Sigmoid colon (tissue), 7 donors: ENCODE measurements at regions of chr1 and their contacts with region 1.

Region 1: DNA sequence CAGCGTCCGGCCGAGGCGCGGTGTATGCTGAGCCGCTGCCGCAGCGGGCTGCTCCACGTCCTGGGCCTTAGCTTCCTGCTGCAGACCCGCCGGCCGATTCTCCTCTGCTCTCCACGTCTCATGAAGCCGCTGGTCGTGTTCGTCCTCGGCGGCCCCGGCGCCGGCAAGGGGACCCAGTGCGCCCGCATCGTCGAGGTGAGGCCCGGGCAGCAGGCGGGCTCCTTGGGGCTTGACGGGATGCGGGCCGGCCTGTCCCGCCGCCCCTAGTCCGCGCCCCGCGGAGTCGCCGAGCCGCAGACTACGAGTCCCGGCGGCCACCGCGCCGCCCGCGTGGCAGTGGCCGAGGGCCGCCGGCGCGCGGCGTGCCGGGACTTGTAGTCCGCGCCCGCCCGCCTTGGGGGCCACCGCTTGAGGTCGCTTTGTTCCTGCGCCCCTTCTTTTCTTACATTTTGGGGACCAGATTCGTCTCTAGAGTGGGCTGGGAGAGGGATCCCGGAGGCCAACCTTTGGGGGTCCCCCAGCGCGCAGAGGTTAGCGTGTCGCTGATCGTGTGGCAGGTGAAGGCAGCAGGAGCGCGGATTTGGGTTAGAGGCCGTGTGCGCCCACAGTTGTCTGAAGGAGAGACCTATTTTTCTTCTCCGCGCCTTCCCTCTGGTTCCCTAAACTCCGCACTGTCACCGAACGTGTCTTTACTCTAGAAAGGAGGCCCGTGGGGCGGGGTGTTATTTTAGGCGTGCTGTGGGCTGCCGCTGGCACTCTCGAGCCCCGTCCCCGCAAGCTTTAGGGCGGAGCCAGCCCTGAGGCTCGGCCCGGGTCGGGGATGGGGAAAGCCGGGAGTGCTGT is 553 bp downstream of the CMPK1 start:
- DNase-seq: peak; percentile 88
- H3K4me3 ChIP-seq: peak overlapping the region; percentile 96 to 98 (median 98)
- H3K27ac ChIP-seq: peak overlapping the region; percentile 98 to 100 (median 100)
- H3K4me1 ChIP-seq: peaks cover 0 to 47% (median 39%) of the 10 kb centered on the region in 4 donors
- H3K27me3 ChIP-seq: no peaks in the 10 kb centered on the region
- CTCF ChIP-seq: peak in 1 of 4 experiments; percentile 13
- EP300 ChIP-seq: no peak
- POLR2A ChIP-seq: peak in 1 of 2 donors; percentile 17

Region 2: GRCh38 chr1:47231301-47232186 is 102.6 kb before region 1 on chr1:
- intact Hi-C with region 1: loop called (anchors 5 kb)
- DNase-seq: no peak
- H3K4me3 ChIP-seq: peak overlapping the region; percentile 1 to 39 (median 32)
- H3K27ac ChIP-seq: peak overlapping the region; percentile 34 to 64 (median 38)
- H3K4me1 ChIP-seq: peaks cover 0 to 34% (median 23%) of the 10 kb centered on the region in 4 donors
- H3K27me3 ChIP-seq: peaks cover 60 to 95% (median 74%) of the 10 kb centered on the region in 3 donors
- CTCF ChIP-seq: no peak
- EP300 ChIP-seq: no peak
- POLR2A ChIP-seq: no peak

Region 3: GRCh38 chr1:47313915-47314664 is 20.1 kb before region 1 on chr1 and contains the start of gene STIL:
- intact Hi-C with region 1: loop called (anchors 1 kb)
- DNase-seq: peak; percentile 99
- H3K4me3 ChIP-seq: peak within 1 kb of the TSS; percentile 36 to 74 (median 57)
- H3K27ac ChIP-seq: peak within 1 kb of the TSS; percentile 70 to 82 (median 74)
- H3K4me1 ChIP-seq: peaks cover 0 to 11% (median 8%) of the 10 kb centered on the region in 4 donors
- H3K27me3 ChIP-seq: no peaks in the 10 kb centered on the region
- CTCF ChIP-seq: no peak
- EP300 ChIP-seq: no peak
- POLR2A ChIP-seq: no peak
- total RNA-seq, gene STIL: 0.28 to 0.71 (median 0.44) TPM

Region 4: DNA sequence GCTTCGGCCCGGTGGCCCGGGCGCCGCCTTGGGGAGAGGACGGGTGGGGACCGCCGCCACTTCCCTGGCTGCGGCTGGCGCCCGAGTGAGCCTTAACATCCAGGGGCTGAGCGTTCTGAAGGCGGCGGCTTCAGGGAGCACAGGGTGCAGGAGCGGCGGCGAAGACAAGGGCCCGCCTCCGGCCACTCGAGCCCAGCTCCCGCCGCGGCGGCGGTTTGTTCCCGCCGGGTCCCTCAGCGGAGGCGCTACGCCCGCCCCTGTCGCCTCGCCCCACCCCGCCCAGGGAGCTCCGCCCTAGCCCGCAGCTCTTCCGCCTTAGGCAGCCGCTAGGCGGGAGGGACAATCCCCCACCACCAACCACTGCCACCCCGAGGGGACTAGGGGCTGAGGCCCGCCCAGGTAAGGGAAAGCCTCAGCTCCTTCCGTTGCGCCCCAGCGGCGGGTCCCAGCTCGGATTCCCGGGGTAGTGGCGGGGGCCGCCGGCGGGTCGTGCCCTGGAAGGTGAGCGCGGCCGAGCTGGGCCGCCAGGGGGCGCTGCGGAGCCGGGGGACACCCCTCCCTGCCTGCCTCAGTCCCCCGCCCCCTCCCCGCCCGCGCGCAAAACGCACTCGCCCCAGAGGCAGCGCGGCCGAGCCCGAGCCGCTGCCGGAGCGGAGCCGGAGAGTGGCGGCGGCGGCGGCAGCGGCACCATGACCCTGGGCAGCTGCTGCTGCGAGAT is 103.5 kb after region 1 on chr1 and contains the start of gene FOXD2:
- intact Hi-C with region 1: loop called (anchors 5 kb)
- DNase-seq: peak; percentile 88
- H3K4me3 ChIP-seq: peak within 1 kb of the TSS; percentile 46 to 66 (median 56)
- H3K27ac ChIP-seq: peak within 1 kb of the TSS; percentile 56 to 76 (median 72)
- H3K4me1 ChIP-seq: peaks cover 0 to 56% (median 50%) of the 10 kb centered on the region in 4 donors
- H3K27me3 ChIP-seq: peaks cover 68 to 99% (median 93%) of the 10 kb centered on the region in 3 donors
- CTCF ChIP-seq: peak; percentile 90 to 97 (median 94)
- EP300 ChIP-seq: no peak
- POLR2A ChIP-seq: peak in 1 of 2 donors; percentile 70
- total RNA-seq, gene FOXD2: under 0.01 to 0.14 TPM in 2 of 4 donors, not detected in the others

Region 5: DNA sequence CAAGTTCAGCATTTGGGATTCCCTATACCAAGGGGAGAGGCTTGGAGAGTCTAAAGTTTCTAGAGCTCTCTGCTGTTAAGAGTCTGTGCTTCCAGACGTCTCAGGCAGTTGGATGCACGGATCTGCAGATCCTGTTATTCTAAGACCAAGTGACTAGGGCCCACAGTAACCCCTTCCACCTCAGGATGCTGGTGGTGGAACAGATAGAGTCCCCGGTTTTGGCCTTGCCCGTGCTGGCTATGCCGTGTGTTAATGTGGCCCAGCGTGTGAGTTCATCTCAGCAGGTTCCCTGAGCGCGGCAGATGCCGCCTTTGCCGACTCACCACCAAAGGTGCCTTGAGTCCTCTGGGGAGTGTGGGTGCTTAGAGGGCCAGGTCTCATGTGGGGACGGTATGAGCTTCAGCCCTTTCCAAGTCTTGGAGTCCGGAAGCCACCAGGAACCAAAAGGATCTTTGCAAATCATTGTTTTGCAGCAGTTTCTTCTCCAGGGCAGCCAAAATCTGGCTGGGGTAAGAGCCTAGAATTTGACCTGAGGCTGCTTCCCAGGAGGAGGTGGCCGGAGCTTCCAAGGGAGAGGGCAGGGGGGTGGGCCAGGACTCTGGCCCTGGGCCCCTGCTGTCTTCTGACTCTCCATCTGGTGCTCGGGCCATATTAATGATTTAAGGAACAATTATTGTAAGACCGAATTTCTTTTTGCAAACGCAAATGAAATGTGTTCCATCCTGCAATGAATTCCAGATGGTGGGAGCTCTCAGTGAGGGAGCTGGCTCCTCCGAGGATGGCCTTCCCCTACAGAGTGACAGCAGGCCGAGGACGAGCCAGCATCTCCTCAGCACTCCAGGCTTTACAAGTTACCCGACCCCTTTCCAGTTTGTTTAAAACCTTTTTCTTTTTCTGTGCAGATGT is 309.4 kb after region 1 on chr1:
- intact Hi-C with region 1: no loop called
- DNase-seq: peak; percentile 52
- H3K4me3 ChIP-seq: no peak overlapping the region
- H3K27ac ChIP-seq: peak overlapping the region in 1 of 4 donors; percentile 14
- H3K4me1 ChIP-seq: no peaks in the 10 kb centered on the region
- H3K27me3 ChIP-seq: no peaks in the 10 kb centered on the region
- CTCF ChIP-seq: no peak
- EP300 ChIP-seq: no peak
- POLR2A ChIP-seq: no peak